Panc1 (cell line): ENCODE measurements at regions of chr19 and their contacts with region 1.

Region 1: GRCh38 chr19:40025938-40026596 is 29.2 kb downstream of the ZNF546 start:
- DNase-seq: no peak
- ATAC-seq: no peak
- H3K4me3 ChIP-seq: no peak overlapping the region
- H3K27ac ChIP-seq: no peak overlapping the region
- H3K4me1 ChIP-seq: no peaks in the 10 kb centered on the region
- H3K27me3 ChIP-seq: no peaks in the 10 kb centered on the region
- CTCF ChIP-seq: no peak

Region 2: GRCh38 chr19:39824143-39825092 is 201.6 kb before region 1 on chr19:
- CTCF ChIA-PET with region 1: no interaction called
- POLR2A ChIA-PET with region 1: interaction called, 14 read pairs
- in situ Hi-C with region 1: no loop called
- intact Hi-C with region 1: no loop called
- DNase-seq: peak; percentile 100
- ATAC-seq: peak; percentile 97
- H3K4me3 ChIP-seq: peak overlapping the region; percentile 37 to 51
- H3K27ac ChIP-seq: peak overlapping the region; percentile 78
- H3K4me1 ChIP-seq: peaks cover 22% of the 10 kb centered on the region
- H3K27me3 ChIP-seq: no peaks in the 10 kb centered on the region
- CTCF ChIP-seq: no peak

Region 3: DNA sequence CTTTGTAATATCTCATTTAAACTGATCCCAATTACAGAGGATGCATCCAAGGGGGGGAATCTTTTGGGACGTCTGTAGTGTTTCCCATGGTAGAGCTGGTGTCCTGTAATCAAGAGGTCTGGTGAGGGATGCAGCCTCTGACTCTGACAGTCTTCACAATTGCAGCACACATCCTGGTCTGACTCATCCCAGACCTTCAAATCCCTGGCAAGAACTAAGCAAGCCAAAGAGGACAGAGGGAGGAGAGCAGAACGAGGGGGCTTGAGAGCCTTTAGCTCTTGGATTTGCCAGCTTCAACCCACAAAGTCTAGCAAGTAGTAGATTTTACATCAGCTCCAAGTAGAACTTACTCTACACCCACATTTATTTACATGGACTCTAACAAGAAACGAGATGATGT is 74.4 kb before region 1 on chr19:
- CTCF ChIA-PET with region 1: no interaction called
- POLR2A ChIA-PET with region 1: interaction called, 13 read pairs
- in situ Hi-C with region 1: no loop called
- intact Hi-C with region 1: no loop called
- DNase-seq: no peak
- ATAC-seq: peak; percentile 20
- H3K4me3 ChIP-seq: no peak overlapping the region
- H3K27ac ChIP-seq: no peak overlapping the region
- H3K4me1 ChIP-seq: no peaks in the 10 kb centered on the region
- H3K27me3 ChIP-seq: no peaks in the 10 kb centered on the region
- CTCF ChIP-seq: no peak

Region 4: DNA sequence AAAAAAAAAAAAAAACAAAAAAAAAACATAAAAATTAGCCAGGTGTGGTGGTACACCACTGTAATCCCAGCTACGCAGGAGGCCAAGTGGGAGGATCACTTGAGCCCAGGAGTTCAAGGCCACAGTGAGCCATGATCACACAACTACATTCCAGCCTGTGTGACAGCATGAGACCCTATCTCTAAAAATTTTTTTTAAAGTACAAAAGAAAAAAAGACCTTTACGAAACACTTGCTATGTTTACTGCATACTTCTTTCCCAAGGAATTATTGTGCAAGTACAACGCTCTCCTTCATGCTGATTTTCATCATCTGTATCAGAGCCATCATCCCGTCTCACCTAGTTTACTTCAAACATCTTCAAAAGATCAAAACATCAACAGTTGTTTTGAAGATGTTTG is 93.3 kb after region 1 on chr19:
- CTCF ChIA-PET with region 1: no interaction called
- POLR2A ChIA-PET with region 1: interaction called, 14 read pairs
- in situ Hi-C with region 1: no loop called
- intact Hi-C with region 1: no loop called
- DNase-seq: no peak
- ATAC-seq: no peak
- H3K4me3 ChIP-seq: no peak overlapping the region
- H3K27ac ChIP-seq: no peak overlapping the region
- H3K4me1 ChIP-seq: no peaks in the 10 kb centered on the region
- H3K27me3 ChIP-seq: peaks cover 46% of the 10 kb centered on the region
- CTCF ChIP-seq: no peak